Colonic mucosa (tissue), 4 donors: ENCODE measurements at regions of chr5 and their contacts with region 1.

Region 1: DNA sequence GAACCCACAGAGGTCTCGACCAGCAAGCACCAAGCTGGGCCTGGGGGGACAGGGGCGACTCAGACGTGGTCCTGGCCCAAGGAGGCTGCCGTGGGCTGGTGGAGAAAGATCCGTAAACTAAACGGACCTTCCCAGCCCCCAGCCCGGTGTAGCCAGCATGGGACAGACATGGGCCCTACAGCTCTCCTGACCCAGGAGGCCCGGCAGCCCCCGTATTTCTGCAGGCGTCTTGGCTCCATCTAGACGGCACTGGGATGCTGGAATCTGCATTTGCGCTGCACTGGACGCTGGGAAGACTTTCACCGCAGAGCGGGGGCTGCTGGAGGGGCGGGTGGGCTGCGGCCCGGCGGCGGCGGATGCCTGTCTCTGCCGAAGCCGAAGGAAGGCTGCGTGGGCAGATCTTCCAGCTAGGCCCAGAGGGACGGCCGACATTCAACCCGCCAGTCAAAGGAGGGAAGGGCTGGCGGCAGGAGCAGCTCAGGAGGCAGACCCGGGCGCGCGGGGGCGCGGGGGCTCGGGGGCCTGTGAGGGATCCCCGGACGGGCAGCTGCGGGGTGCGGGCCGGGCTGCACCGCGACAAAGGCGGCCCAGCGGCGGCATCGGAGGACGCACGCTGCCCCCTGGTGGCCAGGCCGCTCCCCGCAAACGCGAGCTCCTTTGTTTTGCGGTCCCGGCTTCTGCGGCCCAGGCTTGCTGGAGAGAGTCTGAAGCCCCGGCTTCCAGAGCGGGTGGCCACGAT is 266.2 kb downstream of the NSG2 start:
- DNase-seq: peak; percentile 61
- H3K4me3 ChIP-seq: peak overlapping the region; percentile 33
- H3K27ac ChIP-seq: no peak overlapping the region
- H3K4me1 ChIP-seq: no peaks in the 10 kb centered on the region
- H3K27me3 ChIP-seq: peaks cover 7% of the 10 kb centered on the region
- CTCF ChIP-seq: peak; percentile 82

Region 2: DNA sequence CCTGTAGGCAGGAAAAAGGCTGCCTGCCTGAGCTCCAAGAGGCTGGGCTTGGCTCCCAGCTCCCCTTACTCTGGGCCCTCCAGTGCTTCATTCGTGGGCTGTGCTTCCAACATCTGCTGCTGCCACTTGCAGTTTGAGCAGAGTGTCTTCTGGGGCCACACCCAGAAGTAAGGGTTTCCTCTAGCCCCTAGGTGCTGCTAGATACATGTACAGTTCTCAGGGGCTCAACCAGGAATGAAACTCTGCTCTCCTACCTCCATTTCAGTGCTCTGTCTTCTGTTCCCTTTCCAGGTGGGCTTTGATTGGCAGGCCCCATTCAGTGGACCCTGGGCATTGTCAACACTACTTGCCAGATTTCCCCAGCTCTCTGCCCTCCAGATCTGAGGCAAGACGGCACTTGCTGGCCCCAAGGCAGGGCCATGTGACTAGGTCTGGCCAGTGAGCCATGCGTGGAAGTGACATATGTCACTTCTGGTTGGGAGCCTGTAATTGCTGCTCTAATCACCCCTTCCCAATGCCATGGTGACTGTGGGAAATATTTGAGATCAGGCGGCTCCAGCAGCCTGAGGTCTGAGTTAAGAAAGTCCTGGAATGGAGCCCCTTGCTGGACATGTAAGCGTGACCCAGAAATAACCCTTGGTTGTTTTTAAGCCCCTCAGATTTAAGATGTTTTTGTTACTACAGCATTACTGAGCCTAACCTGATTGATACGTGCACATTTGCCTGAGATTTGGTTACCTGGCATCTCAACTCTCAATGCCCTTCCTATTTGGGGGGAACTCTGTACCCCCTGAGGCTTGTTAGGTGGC is 685.8 kb before region 1 on chr5:
- intact Hi-C with region 1: loop called (anchors 10 kb)
- DNase-seq: no peak
- H3K4me3 ChIP-seq: no peak overlapping the region
- H3K27ac ChIP-seq: no peak overlapping the region
- H3K4me1 ChIP-seq: no peaks in the 10 kb centered on the region
- H3K27me3 ChIP-seq: no peaks in the 10 kb centered on the region
- CTCF ChIP-seq: no peak

Region 3: GRCh38 chr5:174045470-174046025 is 266.2 kb before region 1 on chr5 and contains the start of gene NSG2:
- intact Hi-C with region 1: loop called (anchors 5 kb)
- DNase-seq: peak; percentile 40
- H3K4me3 ChIP-seq: no peak within 1 kb of the TSS
- H3K27ac ChIP-seq: no peak within 1 kb of the TSS
- H3K4me1 ChIP-seq: no peaks in the 10 kb centered on the region
- H3K27me3 ChIP-seq: no peaks in the 10 kb centered on the region
- CTCF ChIP-seq: no peak
- total RNA-seq, gene NSG2: 0.27 to 2.5 TPM